MCF 10A (cell line): ENCODE measurements at regions of chr9 and their contacts with region 1.

Region 1: DNA sequence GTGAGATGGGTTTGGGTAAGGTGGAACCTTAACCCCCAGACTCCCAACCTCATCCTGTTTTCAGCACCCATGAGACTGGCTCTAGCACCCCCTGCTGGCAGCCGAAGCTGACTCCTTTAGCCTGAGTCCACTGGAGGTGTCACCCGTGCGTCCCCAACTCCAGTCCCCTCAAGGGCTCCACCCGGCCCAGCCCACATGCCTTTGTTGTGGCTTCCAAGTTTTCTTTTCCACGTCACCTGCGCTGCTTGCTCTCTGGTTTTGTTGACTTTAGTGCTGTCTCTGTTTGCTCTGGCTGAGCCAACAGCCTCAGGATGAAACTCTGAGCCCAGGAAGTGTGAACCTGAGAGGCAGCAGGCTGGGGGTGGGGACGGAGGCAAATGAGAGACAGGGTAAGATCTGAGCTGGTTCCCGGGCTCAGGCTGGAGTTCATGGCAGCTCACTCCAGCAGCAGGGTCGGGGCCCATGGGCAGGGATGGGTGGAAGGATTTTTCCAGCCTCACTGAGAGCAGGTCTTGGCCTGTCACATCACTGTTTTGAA is 13.2 kb upstream of the AQP7 start:
- DNase-seq: peak; percentile 82
- H3K4me3 Mint-ChIP-seq: no peak overlapping the region
- H3K27ac Mint-ChIP-seq: peak overlapping the region; percentile 36
- H3K4me1 Mint-ChIP-seq: peaks cover 34% of the 10 kb centered on the region
- H3K27me3 Mint-ChIP-seq: no peaks in the 10 kb centered on the region
- CTCF ChIP-seq: peak; percentile 57

Region 2: DNA sequence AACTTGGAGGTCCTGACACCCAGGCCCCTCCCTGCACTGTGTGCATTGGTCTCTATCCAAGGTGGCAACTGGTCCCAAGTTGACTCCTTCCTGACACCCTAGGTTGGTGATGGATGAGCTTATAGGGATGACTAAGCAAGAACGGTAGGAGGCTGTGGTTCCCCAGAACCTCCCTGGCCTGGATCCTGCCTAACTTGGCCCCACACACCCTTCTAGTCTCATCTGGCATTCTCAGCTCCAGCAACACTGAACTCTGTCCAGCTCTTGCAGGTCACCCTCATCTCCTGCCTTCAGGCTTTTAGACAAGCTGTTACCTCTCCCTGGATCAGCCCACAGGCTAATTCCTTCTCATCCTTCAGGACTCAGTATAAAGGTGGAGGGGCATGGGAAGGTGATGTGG is 15.4 kb after region 1 on chr9:
- CTCF ChIA-PET with region 1: interaction called, 18 read pairs
- POLR2A ChIA-PET with region 1: no interaction called
- intact Hi-C with region 1: no loop called
- DNase-seq: no peak
- H3K4me3 Mint-ChIP-seq: no peak overlapping the region
- H3K27ac Mint-ChIP-seq: no peak overlapping the region
- H3K4me1 Mint-ChIP-seq: peaks cover 17% of the 10 kb centered on the region
- H3K27me3 Mint-ChIP-seq: no peaks in the 10 kb centered on the region
- CTCF ChIP-seq: no peak

Region 3: DNA sequence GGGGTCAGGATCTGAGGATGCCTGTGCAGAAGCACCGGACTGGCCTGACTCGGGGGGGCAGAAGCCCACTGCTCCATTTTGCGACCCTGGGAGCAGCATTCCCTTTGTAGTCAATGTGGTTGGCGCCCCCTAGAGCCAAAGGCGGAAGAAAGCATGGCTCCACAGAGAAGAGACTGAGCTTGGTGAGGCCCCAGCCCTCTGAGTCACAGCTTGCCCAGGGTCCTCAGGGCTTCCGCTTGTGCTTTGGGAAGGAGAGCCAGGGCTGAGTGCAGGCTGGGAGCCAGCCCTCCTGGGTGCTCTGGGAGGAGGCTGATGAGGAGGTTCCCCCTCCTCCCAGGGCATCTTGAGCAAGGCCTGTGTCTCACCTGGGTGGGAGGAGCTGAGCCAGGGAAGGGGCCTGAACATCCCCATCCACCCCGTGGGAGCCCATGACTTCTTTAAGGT is 37.3 kb after region 1 on chr9:
- CTCF ChIA-PET with region 1: interaction called, 31 read pairs
- POLR2A ChIA-PET with region 1: interaction called, 4 read pairs
- intact Hi-C with region 1: no loop called
- DNase-seq: peak; percentile 96
- H3K4me3 Mint-ChIP-seq: no peak overlapping the region
- H3K27ac Mint-ChIP-seq: no peak overlapping the region
- H3K4me1 Mint-ChIP-seq: peaks cover 13% of the 10 kb centered on the region
- H3K27me3 Mint-ChIP-seq: no peaks in the 10 kb centered on the region
- CTCF ChIP-seq: peak; percentile 66